ENCODE measurements at regions of chr1 and their contacts with region 1.

Region 1: DNA sequence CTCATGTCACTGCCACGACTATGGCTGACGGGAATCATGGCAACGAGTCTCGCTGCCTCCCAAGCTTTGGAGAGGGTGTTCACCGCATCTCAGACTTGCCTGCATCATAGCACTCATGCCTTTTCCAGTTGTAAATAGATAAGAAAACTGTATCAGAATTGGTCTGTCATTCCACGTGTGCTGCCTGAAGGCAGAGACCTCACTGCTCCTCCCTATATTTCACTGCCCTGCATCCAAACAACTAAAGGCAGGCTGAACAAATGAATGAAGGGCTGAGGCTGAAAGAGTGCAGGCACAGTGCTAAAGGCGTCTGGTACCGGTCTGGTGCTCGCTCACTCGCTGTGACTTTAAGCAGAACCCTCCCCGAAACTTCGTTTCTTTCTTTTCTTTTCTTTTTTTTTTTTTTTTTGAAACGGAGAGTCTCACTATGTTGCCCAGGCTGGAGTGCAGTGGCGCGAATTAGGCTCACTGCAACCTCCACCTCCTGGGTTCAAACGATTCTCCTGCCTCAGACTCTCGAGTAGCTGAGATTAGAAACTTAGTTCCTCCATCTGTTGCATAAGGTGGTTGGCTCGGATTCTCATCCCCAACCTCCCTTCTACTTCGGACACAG is 542 bp downstream of the EIF2B3 start:
- DNase-seq: peak; percentile 10
- H3K4me3 ChIP-seq: peak overlapping the region; percentile 76 to 94 (median 91)
- H3K27ac ChIP-seq: peak overlapping the region; percentile 46
- H3K4me1 ChIP-seq: peaks cover 10% of the 10 kb centered on the region
- H3K27me3 ChIP-seq: no peaks in the 10 kb centered on the region
- CTCF ChIP-seq: no peak

Region 2: DNA sequence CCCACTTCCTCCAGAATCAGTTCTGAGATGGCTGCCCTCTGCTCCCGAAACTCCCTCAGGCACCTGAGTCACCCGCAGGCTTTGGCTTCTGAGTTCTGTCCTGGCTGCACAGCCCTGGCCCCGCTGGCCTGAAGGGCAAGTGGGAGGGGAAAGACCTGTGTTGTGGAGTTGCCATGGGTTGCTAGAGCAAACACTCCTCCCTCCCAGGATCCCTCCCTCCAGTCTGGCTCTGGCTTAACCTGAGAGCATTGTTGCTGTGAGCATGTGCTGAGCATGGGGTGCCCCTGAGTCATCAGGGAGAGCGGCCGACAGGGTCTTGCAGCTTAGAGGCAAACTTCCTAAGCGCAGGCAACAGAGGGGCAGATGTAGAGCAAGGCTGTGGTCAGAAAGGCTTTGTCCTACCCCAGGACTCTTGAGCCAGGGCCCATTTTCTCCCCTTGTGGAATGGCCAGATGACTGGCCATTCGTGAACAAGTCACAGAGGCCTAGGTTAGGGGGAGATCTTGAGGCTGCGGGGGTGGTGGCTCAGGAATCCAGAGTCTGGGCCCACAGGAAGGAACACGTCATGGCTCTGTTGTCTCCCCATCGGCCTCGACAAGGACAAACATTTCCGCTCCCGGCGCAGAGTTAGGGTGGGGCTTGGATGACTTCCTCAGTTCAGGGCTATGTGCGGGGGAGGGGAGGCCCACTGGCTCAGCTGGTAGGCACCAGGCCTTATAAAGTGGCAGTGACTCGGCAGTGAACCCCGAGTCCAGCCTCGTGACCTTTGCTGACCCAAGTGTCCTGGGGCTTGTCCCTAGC is 178.4 kb before region 1 on chr1 and contains the start of gene DYNLT4:
- CTCF ChIA-PET with region 1: no interaction called
- dilution Hi-C with region 1: no loop called
- in situ Hi-C with region 1: no loop called
- intact Hi-C with region 1: no loop called
- DNase-seq: peak; percentile 99
- H3K4me3 ChIP-seq: no peak within 1 kb of the TSS
- H3K27ac ChIP-seq: peak within 1 kb of the TSS; percentile 97
- H3K4me1 ChIP-seq: peaks cover 81% of the 10 kb centered on the region
- H3K27me3 ChIP-seq: no peaks in the 10 kb centered on the region
- CTCF ChIP-seq: no peak
- total RNA-seq, gene DYNLT4: not detected

Region 3: DNA sequence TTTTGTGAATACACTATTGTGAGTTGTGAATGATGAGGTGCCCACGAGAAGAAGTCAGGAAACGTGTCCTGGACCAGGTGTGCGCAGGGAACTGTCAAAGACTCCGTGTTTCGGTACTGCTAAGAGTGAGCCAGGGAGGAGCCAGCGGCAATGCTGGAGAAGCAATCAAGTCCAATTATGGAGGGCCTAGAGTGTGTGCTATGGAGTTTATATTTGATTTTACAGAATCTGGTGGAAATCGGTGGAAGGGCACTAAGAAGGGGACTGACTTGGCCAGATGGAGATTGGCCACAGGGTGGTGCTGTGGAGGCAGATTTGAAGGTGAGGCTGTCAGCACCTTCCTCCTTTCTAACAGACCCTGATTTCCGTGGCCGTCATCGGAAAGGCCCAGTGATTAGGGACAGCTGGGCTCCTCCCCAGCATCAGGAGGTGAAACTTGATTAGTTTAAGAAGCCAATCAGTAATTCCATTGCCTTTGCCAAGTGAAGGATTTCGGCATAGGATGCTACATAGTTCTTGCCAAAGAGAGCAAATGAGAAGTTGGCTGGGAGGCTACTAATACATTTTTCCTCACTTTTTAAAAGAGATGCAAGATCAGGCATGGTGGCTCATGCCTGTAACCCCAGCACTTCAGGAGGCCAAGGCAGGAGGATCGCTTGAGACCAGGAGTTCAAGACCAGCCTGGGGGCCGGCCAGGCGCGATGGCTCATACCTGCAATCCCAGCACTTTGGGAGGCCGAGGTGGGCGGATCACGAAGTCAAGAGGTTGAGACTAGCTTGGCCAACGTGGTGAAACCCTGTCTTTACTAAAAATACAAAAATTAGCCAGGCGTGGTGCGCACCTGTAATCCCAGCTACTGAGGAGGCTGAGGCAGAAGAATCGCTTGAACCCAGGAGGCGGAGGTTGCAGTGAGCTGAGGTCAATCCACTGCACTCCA is 149.8 kb before region 1 on chr1:
- CTCF ChIA-PET with region 1: interaction called, 5 read pairs
- dilution Hi-C with region 1: no loop called
- in situ Hi-C with region 1: no loop called
- intact Hi-C with region 1: loop called (anchors 5 kb)
- DNase-seq: peak; percentile 66
- H3K4me3 ChIP-seq: no peak overlapping the region
- H3K27ac ChIP-seq: no peak overlapping the region
- H3K4me1 ChIP-seq: no peaks in the 10 kb centered on the region
- H3K27me3 ChIP-seq: no peaks in the 10 kb centered on the region
- CTCF ChIP-seq: peak; percentile 89 to 91

Region 4: DNA sequence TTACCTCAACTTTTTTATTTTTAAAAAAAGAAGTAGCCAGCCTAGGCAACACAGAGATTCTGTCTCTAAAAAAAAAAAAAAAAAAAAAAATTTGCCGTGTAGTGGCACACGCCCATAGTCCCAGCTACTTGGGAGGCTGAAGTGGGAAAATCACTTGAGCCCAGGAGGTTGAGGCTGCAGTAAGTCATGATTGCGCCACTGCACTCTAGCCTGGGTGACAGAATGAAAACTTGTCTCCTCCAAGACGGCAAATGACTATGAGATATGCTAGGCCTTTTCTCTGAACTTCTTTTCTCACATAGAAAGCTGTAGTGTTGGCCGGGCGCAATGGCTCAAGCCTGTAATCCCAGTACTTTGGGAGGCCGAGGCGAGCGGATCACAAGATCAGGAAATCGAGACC is 118.1 kb before region 1 on chr1:
- CTCF ChIA-PET with region 1: no interaction called
- dilution Hi-C with region 1: loop called (anchors 5 kb)
- in situ Hi-C with region 1: no loop called
- intact Hi-C with region 1: no loop called
- DNase-seq: no peak
- H3K4me3 ChIP-seq: no peak overlapping the region
- H3K27ac ChIP-seq: no peak overlapping the region
- H3K4me1 ChIP-seq: no peaks in the 10 kb centered on the region
- H3K27me3 ChIP-seq: no peaks in the 10 kb centered on the region
- CTCF ChIP-seq: no peak

Region 5: GRCh38 chr1:44924835-44925513 is 60.9 kb before region 1 on chr1:
- CTCF ChIA-PET with region 1: no interaction called
- dilution Hi-C with region 1: no loop called
- in situ Hi-C with region 1: no loop called
- intact Hi-C with region 1: loop called (anchors 2 kb)
- DNase-seq: peak; percentile 70
- H3K4me3 ChIP-seq: peak overlapping the region in 1 of 3 experiments; percentile 29
- H3K27ac ChIP-seq: peak overlapping the region; percentile 14
- H3K4me1 ChIP-seq: peaks cover 9% of the 10 kb centered on the region
- H3K27me3 ChIP-seq: no peaks in the 10 kb centered on the region
- CTCF ChIP-seq: peak; percentile 44 to 51

Region 6: DNA sequence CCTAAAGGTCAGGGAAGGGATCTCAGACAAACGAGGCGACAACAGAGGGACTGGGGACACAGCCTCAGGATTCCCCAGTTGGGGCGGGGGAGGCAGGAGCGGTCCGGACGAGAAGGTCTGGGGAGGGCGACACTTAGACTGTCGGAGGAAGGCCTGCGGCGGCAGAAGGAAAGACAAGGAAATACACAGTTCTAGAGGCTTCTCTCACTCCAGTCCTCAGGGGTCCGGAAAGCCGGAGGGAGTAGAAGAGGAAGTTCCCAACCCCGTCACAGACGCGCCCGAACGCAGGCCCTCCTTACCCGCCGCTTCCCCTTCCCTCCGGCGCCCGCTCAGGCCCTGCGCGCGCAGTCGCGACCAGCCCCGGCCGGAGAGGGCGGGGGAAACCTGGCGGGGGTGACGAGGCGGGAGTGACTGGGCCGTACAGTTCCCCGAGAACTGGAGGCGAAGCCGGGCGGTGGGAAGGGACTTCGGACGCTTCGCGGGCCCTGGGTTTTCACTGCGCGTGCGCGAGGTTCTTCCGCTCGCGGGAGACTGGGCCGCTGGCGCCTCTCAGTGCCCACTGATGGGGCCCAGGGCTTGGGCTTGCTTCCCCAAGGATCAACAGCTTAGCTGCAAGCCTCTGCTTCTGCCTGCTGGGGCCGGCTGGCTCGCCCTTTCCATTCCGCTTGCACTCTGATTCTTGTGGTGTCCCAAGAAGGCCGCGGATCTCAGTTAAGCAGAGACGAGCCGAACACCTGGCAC is 764.6 kb after region 1 on chr1 and contains the start of gene IPP:
- CTCF ChIA-PET with region 1: no interaction called
- dilution Hi-C with region 1: no loop called
- in situ Hi-C with region 1: no loop called
- intact Hi-C with region 1: loop called (anchors 5 kb)
- DNase-seq: peak; percentile 98
- H3K4me3 ChIP-seq: peak within 1 kb of the TSS; percentile 57 to 68 (median 63)
- H3K27ac ChIP-seq: peak within 1 kb of the TSS; percentile 84
- H3K4me1 ChIP-seq: no peaks in the 10 kb centered on the region
- H3K27me3 ChIP-seq: no peaks in the 10 kb centered on the region
- CTCF ChIP-seq: peak in 1 of 2 donors; percentile 50
- total RNA-seq, gene IPP: 14.0 to 14.5 TPM